Activated B cell treated with CpG ODN at 0.5 μM for 24 hours (primary cell): ENCODE measurements at regions of chr2 and their contacts with region 1.

Region 1: GRCh38 chr2:110172506-110172905 is 32.3 kb downstream of the NPHP1 start:
- DNase-seq: no peak
- ATAC-seq: no peak
- H3K4me3 Mint-ChIP-seq: no peak overlapping the region
- H3K27ac Mint-ChIP-seq: no peak overlapping the region
- H3K4me1 Mint-ChIP-seq: peaks cover 8% of the 10 kb centered on the region
- H3K27me3 Mint-ChIP-seq: no peaks in the 10 kb centered on the region
- CTCF ChIP-seq: no peak

Region 2: DNA sequence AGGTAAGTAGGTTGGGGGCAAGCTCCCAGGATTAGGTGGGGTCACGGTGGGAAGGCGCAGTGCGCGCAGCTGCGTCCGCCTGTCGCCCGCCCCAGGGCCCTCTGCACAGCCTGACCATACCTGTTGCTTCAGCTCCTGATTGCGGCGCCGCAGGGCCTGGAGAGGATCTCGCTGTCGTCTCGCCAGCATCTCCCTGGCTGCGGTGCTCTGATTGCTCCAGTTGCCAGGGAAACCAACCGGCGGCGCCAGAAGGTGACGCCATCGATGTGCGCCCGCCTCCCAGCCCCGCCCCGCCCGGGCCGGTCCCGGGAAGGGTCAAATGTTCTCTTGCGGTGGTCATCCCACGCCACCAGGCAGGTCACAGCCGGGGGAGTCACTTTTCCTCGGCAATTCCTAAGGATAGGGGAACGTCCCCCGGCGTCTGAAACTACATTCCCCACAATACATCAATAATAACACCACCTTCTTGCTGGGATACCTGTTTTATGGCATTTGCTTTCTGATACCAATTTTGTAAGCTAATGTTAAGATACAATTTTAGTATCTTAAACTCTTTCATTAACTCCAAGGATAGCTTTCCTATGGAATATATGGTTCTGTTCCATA is 32.4 kb after region 1 on chr2 and contains the start of gene NPHP1:
- CTCF ChIA-PET with region 1: no interaction called
- POLR2A ChIA-PET with region 1: no interaction called
- intact Hi-C with region 1: loop called (anchors 1 kb)
- DNase-seq: peak; percentile 87
- ATAC-seq: peak; percentile 93
- H3K4me3 Mint-ChIP-seq: peak within 1 kb of the TSS; percentile 86
- H3K27ac Mint-ChIP-seq: peak within 1 kb of the TSS; percentile 76
- H3K4me1 Mint-ChIP-seq: peaks cover 20% of the 10 kb centered on the region
- H3K27me3 Mint-ChIP-seq: no peaks in the 10 kb centered on the region
- CTCF ChIP-seq: no peak
- total RNA-seq, gene NPHP1: 1.6 and 2.0 TPM in 2 replicates